A673 (cell line): ENCODE measurements at regions of chr16 and their contacts with region 1.

Region 1: GRCh38 chr16:78407191-78407590 is 307.7 kb downstream of the WWOX start:
- DNase-seq: no peak
- H3K4me3 ChIP-seq: no peak overlapping the region
- H3K27ac ChIP-seq: no peak overlapping the region
- H3K4me1 ChIP-seq: no peaks in the 10 kb centered on the region
- H3K27me3 ChIP-seq: no peaks in the 10 kb centered on the region
- CTCF ChIP-seq: no peak

Region 2: DNA sequence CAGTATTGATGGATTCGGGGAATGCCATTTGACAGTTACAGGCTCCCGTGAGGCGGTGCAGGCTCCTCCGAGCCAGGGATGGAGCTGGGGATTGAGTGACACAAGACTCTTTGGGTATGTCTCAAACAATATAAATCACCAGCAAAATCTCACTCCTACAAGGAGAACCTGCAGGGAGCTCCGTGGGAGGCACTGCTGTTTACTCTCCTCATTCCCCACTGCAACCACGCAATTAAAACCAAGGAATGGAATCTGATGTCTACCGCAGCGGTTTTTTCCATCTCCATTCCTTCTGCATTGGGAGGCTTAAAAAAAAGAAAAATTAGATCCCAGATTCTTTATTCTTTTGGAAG is 149.8 kb before region 1 on chr16:
- CTCF ChIA-PET with region 1: no interaction called
- POLR2A ChIA-PET with region 1: interaction called, 13 read pairs
- intact Hi-C with region 1: no loop called
- DNase-seq: peak; percentile 17
- H3K4me3 ChIP-seq: no peak overlapping the region
- H3K27ac ChIP-seq: no peak overlapping the region
- H3K4me1 ChIP-seq: no peaks in the 10 kb centered on the region
- H3K27me3 ChIP-seq: no peaks in the 10 kb centered on the region
- CTCF ChIP-seq: no peak

Region 3: GRCh38 chr16:78421181-78421708 is 14.1 kb after region 1 on chr16:
- CTCF ChIA-PET with region 1: no interaction called
- POLR2A ChIA-PET with region 1: interaction called, 19 read pairs
- intact Hi-C with region 1: no loop called
- DNase-seq: no peak
- H3K4me3 ChIP-seq: no peak overlapping the region
- H3K27ac ChIP-seq: no peak overlapping the region
- H3K4me1 ChIP-seq: no peaks in the 10 kb centered on the region
- H3K27me3 ChIP-seq: no peaks in the 10 kb centered on the region
- CTCF ChIP-seq: no peak